ENCODE measurements at regions of chr4 and their contacts with region 1.

Region 1: GRCh38 chr4:80335554-80336358 is at the start of gene CFAP299:
- DNase-seq: peak; percentile 82
- H3K4me3 ChIP-seq: peak within 1 kb of the TSS; percentile 34 to 65 (median 58)
- H3K27ac ChIP-seq: peak within 1 kb of the TSS in 3 of 4 donors; percentile 13 to 58 (median 39)
- H3K4me1 ChIP-seq: peaks cover 0 to 17% (median 9%) of the 10 kb centered on the region in 4 donors
- H3K27me3 ChIP-seq: no peaks in the 10 kb centered on the region
- CTCF ChIP-seq: peak in 3 of 4 experiments; percentile 11 to 54 (median 42)
- EP300 ChIP-seq: no peak
- POLR2A ChIP-seq: no peak
- total RNA-seq, gene CFAP299: 1.4 TPM in 1 of 4 donors, not detected in the others

Region 2: GRCh38 chr4:78938868-78939666 is 1396.7 kb before region 1 on chr4 and contains the start of gene PAQR3:
- intact Hi-C with region 1: loop called (anchors 5 kb)
- DNase-seq: peak; percentile 92
- H3K4me3 ChIP-seq: peak within 1 kb of the TSS; percentile 70 to 89 (median 84)
- H3K27ac ChIP-seq: peak within 1 kb of the TSS; percentile 81 to 88 (median 85)
- H3K4me1 ChIP-seq: peaks cover 0 to 25% (median 14%) of the 10 kb centered on the region in 4 donors
- H3K27me3 ChIP-seq: no peaks in the 10 kb centered on the region
- CTCF ChIP-seq: no peak
- EP300 ChIP-seq: no peak
- POLR2A ChIP-seq: no peak
- total RNA-seq, gene PAQR3: 17.1 to 32.1 (median 21.9) TPM

Region 3: GRCh38 chr4:78951862-78952472 is 1383.8 kb before region 1 on chr4:
- intact Hi-C with region 1: loop called (anchors 5 kb)
- DNase-seq: no peak
- H3K4me3 ChIP-seq: no peak overlapping the region
- H3K27ac ChIP-seq: no peak overlapping the region
- H3K4me1 ChIP-seq: no peaks in the 10 kb centered on the region
- H3K27me3 ChIP-seq: no peaks in the 10 kb centered on the region
- CTCF ChIP-seq: peak; percentile 53 to 69 (median 64)
- EP300 ChIP-seq: no peak
- POLR2A ChIP-seq: no peak

Region 4: GRCh38 chr4:79650794-79651431 is 684.8 kb before region 1 on chr4:
- intact Hi-C with region 1: no loop called
- DNase-seq: no peak
- H3K4me3 ChIP-seq: no peak overlapping the region
- H3K27ac ChIP-seq: peak overlapping the region; percentile 59 to 79 (median 70)
- H3K4me1 ChIP-seq: peaks cover 0 to 46% (median 24%) of the 10 kb centered on the region in 4 donors
- H3K27me3 ChIP-seq: no peaks in the 10 kb centered on the region
- CTCF ChIP-seq: no peak
- EP300 ChIP-seq: peak in 2 of 4 donors; percentile 31 to 37
- POLR2A ChIP-seq: no peak

Region 5: DNA sequence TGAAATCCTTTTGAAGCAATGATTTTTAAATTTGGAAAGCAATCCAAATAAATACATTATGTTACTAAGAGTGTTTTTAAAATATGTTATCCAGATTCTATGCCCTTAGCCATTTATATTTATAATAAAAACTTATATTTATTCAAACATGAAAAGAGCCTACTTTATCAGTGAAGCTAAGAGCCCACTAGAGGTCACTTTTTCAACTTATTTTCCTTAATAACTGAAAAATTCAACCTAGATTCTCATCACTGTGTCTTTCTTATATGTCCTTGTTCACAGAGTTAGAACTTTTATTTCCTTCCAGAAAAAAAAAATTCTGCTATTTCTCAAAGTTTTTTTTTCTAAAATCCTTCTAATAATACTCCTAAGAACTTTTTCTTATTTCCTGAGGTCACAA is 114.6 kb before region 1 on chr4:
- intact Hi-C with region 1: loop called (anchors 5 kb)
- DNase-seq: no peak
- H3K4me3 ChIP-seq: no peak overlapping the region
- H3K27ac ChIP-seq: no peak overlapping the region
- H3K4me1 ChIP-seq: no peaks in the 10 kb centered on the region
- H3K27me3 ChIP-seq: no peaks in the 10 kb centered on the region
- CTCF ChIP-seq: peak in 1 of 4 experiments; percentile 20
- EP300 ChIP-seq: no peak
- POLR2A ChIP-seq: no peak

Region 6: DNA sequence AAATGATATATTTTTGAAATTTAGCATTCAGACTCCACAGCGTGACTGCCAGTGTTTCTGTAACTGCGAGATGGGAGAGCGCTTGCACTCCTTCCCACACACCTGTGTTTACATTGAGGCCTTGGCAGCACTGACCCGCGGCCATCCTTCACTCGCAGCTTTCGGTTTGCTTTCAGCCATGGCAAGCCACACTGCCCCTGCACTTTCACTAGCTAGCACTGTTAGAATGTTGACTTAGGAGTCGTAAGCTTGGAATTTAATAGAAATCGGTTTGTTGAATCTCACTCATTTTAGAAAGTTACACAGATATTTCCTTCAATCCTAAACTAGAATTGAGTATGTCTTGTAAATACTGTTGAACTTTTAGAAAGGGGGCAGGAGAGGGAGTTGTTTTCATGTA is 136.0 kb after region 1 on chr4:
- intact Hi-C with region 1: no loop called
- DNase-seq: peak; percentile 71
- H3K4me3 ChIP-seq: peak overlapping the region in 3 of 4 donors; percentile 10 to 35 (median 33)
- H3K27ac ChIP-seq: peak overlapping the region in 2 of 4 donors; percentile 21 to 39
- H3K4me1 ChIP-seq: peaks cover 0 to 3% (median 0%) of the 10 kb centered on the region in 4 donors
- H3K27me3 ChIP-seq: no peaks in the 10 kb centered on the region
- CTCF ChIP-seq: no peak
- EP300 ChIP-seq: no peak
- POLR2A ChIP-seq: no peak